Activated B cell treated with CpG ODN at 0.5 μM for 24 hours (primary cell): ENCODE measurements at regions of chr4 and their contacts with region 1.

Region 1: GRCh38 chr4:83138946-83139345 is 24.4 kb upstream of the PLAC8 start:
- DNase-seq: no peak
- ATAC-seq: peak; percentile 84
- H3K4me3 Mint-ChIP-seq: peak overlapping the region; percentile 21
- H3K27ac Mint-ChIP-seq: peak overlapping the region; percentile 73
- H3K4me1 Mint-ChIP-seq: peaks cover 60% of the 10 kb centered on the region
- H3K27me3 Mint-ChIP-seq: no peaks in the 10 kb centered on the region
- CTCF ChIP-seq: no peak

Region 2: GRCh38 chr4:83124111-83124780 is 14.7 kb before region 1 on chr4:
- CTCF ChIA-PET with region 1: interaction called, 4 read pairs
- POLR2A ChIA-PET with region 1: interaction called, 3 read pairs
- intact Hi-C with region 1: loop called (anchors 2 kb)
- DNase-seq: no peak
- ATAC-seq: peak; percentile 93
- H3K4me3 Mint-ChIP-seq: peak overlapping the region; percentile 56
- H3K27ac Mint-ChIP-seq: peak overlapping the region; percentile 81
- H3K4me1 Mint-ChIP-seq: peaks cover 47% of the 10 kb centered on the region
- H3K27me3 Mint-ChIP-seq: no peaks in the 10 kb centered on the region
- CTCF ChIP-seq: no peak

Region 3: GRCh38 chr4:83174844-83175414 is 36.0 kb after region 1 on chr4:
- CTCF ChIA-PET with region 1: interaction called, 3 read pairs
- POLR2A ChIA-PET with region 1: interaction called, 8 read pairs
- intact Hi-C with region 1: loop called (anchors 5 kb)
- DNase-seq: peak; percentile 32
- ATAC-seq: peak; percentile 74
- H3K4me3 Mint-ChIP-seq: peak overlapping the region; percentile 83
- H3K27ac Mint-ChIP-seq: peak overlapping the region; percentile 94
- H3K4me1 Mint-ChIP-seq: peaks cover 88% of the 10 kb centered on the region
- H3K27me3 Mint-ChIP-seq: no peaks in the 10 kb centered on the region
- CTCF ChIP-seq: no peak

Region 4: DNA sequence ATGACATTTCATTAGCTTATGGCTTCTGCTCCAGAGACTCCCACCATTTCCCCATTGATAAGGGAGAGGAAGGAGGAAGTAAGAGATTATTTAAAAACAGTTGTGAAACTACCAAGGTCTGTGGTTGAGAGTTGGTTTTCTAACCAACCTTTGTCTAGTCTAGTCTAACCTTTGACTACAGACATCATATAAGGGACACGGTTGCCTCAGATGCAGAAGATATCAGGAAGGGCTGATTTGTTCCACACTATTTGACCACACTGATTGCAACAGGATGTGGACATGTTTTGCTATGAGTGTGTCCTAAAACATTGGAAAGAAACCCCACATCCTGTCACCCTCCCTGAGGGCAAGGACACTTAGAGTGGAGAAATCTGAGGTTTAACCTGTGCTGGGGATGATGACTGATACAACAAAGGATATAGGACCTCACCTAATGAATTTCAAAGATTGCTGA is 92.7 kb after region 1 on chr4:
- CTCF ChIA-PET with region 1: no interaction called
- POLR2A ChIA-PET with region 1: no interaction called
- intact Hi-C with region 1: no loop called
- DNase-seq: no peak
- ATAC-seq: peak; percentile 78
- H3K4me3 Mint-ChIP-seq: peak overlapping the region; percentile 67
- H3K27ac Mint-ChIP-seq: peak overlapping the region; percentile 85
- H3K4me1 Mint-ChIP-seq: peaks cover 52% of the 10 kb centered on the region
- H3K27me3 Mint-ChIP-seq: no peaks in the 10 kb centered on the region
- CTCF ChIP-seq: no peak

Region 5: DNA sequence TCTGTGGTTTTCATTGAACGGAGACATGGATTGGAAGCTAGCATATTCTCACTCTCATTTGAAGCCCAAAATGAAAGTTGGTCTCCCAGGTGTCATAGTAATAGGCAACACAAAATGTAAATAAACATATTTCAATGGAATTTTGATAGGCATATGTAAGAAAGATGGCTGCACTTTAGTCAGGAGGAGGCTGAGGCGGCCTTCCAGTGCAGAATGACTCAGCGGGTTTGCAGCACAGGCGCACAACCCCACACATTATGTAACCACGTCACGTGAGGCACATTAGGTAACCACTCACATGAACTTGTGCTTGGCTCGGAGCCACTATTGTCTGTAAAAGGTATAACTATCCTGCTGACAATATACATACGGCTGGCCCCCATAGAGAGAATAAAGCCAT is 778.6 kb after region 1 on chr4:
- CTCF ChIA-PET with region 1: no interaction called
- POLR2A ChIA-PET with region 1: no interaction called
- intact Hi-C with region 1: no loop called
- DNase-seq: no peak
- ATAC-seq: no peak
- H3K4me3 Mint-ChIP-seq: no peak overlapping the region
- H3K27ac Mint-ChIP-seq: no peak overlapping the region
- H3K4me1 Mint-ChIP-seq: no peaks in the 10 kb centered on the region
- H3K27me3 Mint-ChIP-seq: no peaks in the 10 kb centered on the region
- CTCF ChIP-seq: no peak